ENCODE measurements at regions of chr3 and their contacts with region 1.

Region 1: DNA sequence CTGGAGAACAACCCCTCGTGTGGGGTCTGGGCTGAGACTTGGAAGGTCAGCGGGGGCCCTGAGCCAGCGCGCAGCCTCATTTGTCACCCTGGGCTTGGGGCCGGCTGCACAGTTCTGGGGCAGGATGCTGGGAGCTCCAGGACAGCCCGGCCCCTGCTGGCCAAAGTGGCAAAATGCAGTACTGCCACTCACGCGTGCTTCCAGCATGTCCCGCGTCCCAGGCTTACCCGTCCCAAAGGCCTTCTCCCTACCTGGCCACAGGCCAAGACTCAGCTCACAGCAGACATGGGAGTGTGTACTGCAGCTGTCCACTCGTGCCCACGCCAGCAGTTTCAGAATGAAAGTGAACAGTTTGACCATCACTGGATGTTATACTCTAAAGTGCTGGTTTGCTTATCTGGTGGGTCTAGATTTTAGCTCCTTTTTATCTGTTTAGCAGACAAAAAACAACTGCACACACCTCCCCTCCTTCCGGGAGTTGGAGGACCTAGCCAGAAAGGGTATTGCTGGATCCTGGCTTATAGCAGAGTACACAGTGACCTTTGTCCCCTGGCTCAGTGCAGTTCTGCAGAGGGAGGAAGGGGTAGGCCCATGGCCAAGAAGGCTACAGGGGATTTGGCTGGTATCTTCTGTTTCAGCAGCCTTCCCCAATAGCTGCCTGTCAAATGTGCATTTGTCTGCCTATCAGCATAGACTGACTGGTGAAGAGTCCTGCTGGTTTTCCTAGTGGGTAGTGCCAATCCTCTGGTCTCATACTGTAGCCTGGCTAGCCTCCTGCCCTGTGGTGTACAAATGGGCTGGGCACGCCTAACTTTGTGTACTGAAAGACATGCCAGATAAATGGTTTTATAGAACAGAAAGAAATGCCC is 23.2 kb upstream of the IP6K2 start:
- DNase-seq: peak; percentile 86
- ATAC-seq: peak; percentile 94
- H3K4me3 ChIP-seq: peak overlapping the region; percentile 45 to 65 (median 53)
- H3K27ac ChIP-seq: peak overlapping the region; percentile 79
- H3K4me1 ChIP-seq: peaks cover 52% of the 10 kb centered on the region
- H3K27me3 ChIP-seq: no peaks in the 10 kb centered on the region
- CTCF ChIP-seq: peak; percentile 96
- EP300 ChIP-seq: no peak
- POLR2A ChIP-seq: peak; percentile 54 to 70; a peak in 3 of 4 replicates
- RAD21 ChIP-seq: peak; percentile 80

Region 2: DNA sequence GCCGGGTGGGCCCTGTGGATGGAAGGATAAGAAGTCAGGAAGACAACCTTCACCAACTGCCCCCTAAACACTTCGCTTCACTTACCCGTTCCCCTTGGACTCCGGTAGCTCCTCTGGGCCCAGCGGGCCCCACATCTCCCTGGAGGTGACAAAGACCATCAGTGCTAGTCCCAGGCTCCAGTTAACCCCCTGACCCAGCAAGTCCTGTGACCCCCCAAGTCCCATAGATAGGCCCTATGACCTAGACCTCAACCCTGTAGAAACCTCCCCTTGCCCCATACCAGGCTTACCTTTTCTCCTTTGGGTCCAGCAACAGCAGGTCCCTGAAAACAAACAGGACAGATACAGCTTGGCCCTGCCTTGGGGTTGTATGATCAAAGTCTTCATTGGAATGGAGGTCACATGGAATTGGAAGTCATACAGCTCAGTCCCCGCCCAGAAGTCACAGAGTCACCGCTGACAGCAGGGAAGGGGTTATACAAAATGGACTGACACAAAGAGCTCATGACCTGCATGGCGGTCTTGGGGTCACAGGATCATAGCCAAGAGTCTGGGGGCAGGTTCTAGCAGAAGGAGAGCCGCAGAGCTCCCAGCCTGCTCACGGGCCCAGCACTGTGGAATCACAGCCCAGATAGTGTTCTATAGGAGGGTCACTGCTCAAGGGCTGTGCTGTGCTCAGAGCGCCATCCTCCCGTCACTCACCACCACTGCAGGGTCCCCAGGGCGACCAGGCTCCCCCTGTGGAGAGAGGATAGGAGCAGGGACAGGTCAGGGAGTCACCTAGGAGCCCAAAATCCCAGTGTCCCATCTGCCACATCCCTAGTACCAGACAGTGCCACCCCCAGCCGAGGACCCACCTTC is 158.3 kb before region 1 on chr3:
- CTCF ChIA-PET with region 1: no interaction called
- POLR2A ChIA-PET with region 1: no interaction called
- in situ Hi-C with region 1: no loop called
- intact Hi-C with region 1: no loop called
- DNase-seq: peak; percentile 36
- ATAC-seq: peak; percentile 61
- H3K4me3 ChIP-seq: no peak overlapping the region
- H3K27ac ChIP-seq: no peak overlapping the region
- H3K4me1 ChIP-seq: peaks cover 15% of the 10 kb centered on the region
- H3K27me3 ChIP-seq: no peaks in the 10 kb centered on the region
- CTCF ChIP-seq: peak; percentile 29; the same call in 1 of the 2 replicates
- EP300 ChIP-seq: no peak
- POLR2A ChIP-seq: no peak
- RAD21 ChIP-seq: no peak

Region 3: GRCh38 chr3:48685602-48686511 is 54.3 kb before region 1 on chr3 and contains the start of gene NCKIPSD:
- CTCF ChIA-PET with region 1: interaction called, 3 read pairs
- POLR2A ChIA-PET with region 1: interaction called, 3 read pairs
- in situ Hi-C with region 1: no loop called
- intact Hi-C with region 1: loop called (anchors 1 kb)
- DNase-seq: peak; percentile 71
- ATAC-seq: peak; percentile 85
- H3K4me3 ChIP-seq: peak within 1 kb of the TSS; percentile 82 to 97 (median 88)
- H3K27ac ChIP-seq: peak within 1 kb of the TSS; percentile 83
- H3K4me1 ChIP-seq: peaks cover 26% of the 10 kb centered on the region
- H3K27me3 ChIP-seq: no peaks in the 10 kb centered on the region; a peak in 2 of 5 replicates
- CTCF ChIP-seq: peak; percentile 77
- EP300 ChIP-seq: no peak
- POLR2A ChIP-seq: peak in 1 of 2 experiments; percentile 84; a peak in 2 of 4 replicates
- RAD21 ChIP-seq: peak; percentile 81; the same call in 1 of the 2 replicates
- total RNA-seq, gene NCKIPSD: 13.5 and 14.3 TPM in 2 replicates

Region 4: GRCh38 chr3:48716982-48717746 is 23.0 kb before region 1 on chr3 and contains the start of gene IP6K2:
- CTCF ChIA-PET with region 1: no interaction called
- POLR2A ChIA-PET with region 1: interaction called, 59 read pairs
- in situ Hi-C with region 1: no loop called
- intact Hi-C with region 1: no loop called
- DNase-seq: peak; percentile 96
- ATAC-seq: peak; percentile 96
- H3K4me3 ChIP-seq: peak within 1 kb of the TSS; percentile 96 to 98 (median 97)
- H3K27ac ChIP-seq: peak within 1 kb of the TSS; percentile 97
- H3K4me1 ChIP-seq: peaks cover 56% of the 10 kb centered on the region
- H3K27me3 ChIP-seq: no peaks in the 10 kb centered on the region; a peak in 1 of 5 replicates
- CTCF ChIP-seq: no peak
- EP300 ChIP-seq: peak in 1 of 2 experiments; percentile 86; a peak in 2 of 4 replicates
- POLR2A ChIP-seq: peak; percentile 79 to 96
- RAD21 ChIP-seq: no peak
- total RNA-seq, gene IP6K2: 65.5 and 85.5 TPM in 2 replicates

Region 5: GRCh38 chr3:48756640-48757039 is 16.5 kb after region 1 on chr3:
- CTCF ChIA-PET with region 1: no interaction called
- POLR2A ChIA-PET with region 1: interaction called, 10 read pairs
- in situ Hi-C with region 1: no loop called
- intact Hi-C with region 1: no loop called
- DNase-seq: peak; percentile 42
- ATAC-seq: peak; percentile 34
- H3K4me3 ChIP-seq: no peak overlapping the region
- H3K27ac ChIP-seq: no peak overlapping the region
- H3K4me1 ChIP-seq: peaks cover 10% of the 10 kb centered on the region
- H3K27me3 ChIP-seq: no peaks in the 10 kb centered on the region
- CTCF ChIP-seq: no peak
- EP300 ChIP-seq: no peak
- POLR2A ChIP-seq: no peak
- RAD21 ChIP-seq: no peak

Region 6: GRCh38 chr3:48898383-48899234 is 158.4 kb after region 1 on chr3 and contains the start of gene SLC25A20:
- CTCF ChIA-PET with region 1: no interaction called
- POLR2A ChIA-PET with region 1: interaction called, 10 read pairs
- in situ Hi-C with region 1: no loop called
- intact Hi-C with region 1: no loop called
- DNase-seq: peak; percentile 80
- ATAC-seq: peak; percentile 83
- H3K4me3 ChIP-seq: peak within 1 kb of the TSS; percentile 71 to 94 (median 84)
- H3K27ac ChIP-seq: peak within 1 kb of the TSS; percentile 78
- H3K4me1 ChIP-seq: peaks cover 42% of the 10 kb centered on the region
- H3K27me3 ChIP-seq: no peaks in the 10 kb centered on the region
- CTCF ChIP-seq: no peak; the same call in 1 of the 2 replicates
- EP300 ChIP-seq: no peak
- POLR2A ChIP-seq: no peak
- RAD21 ChIP-seq: peak; percentile 37; the same call in 1 of the 2 replicates
- total RNA-seq, gene SLC25A20: 25.4 and 26.6 TPM in 2 replicates

Measured in HepG2 (cell line).